GM13977 (cell line): ENCODE measurements at regions of chr16 and their contacts with region 1.

Region 1: GRCh38 chr16:84617791-84618580 is at the start of gene COTL1:
- DNase-seq: peak; percentile 96
- CTCF ChIP-seq: no peak

Region 2: DNA sequence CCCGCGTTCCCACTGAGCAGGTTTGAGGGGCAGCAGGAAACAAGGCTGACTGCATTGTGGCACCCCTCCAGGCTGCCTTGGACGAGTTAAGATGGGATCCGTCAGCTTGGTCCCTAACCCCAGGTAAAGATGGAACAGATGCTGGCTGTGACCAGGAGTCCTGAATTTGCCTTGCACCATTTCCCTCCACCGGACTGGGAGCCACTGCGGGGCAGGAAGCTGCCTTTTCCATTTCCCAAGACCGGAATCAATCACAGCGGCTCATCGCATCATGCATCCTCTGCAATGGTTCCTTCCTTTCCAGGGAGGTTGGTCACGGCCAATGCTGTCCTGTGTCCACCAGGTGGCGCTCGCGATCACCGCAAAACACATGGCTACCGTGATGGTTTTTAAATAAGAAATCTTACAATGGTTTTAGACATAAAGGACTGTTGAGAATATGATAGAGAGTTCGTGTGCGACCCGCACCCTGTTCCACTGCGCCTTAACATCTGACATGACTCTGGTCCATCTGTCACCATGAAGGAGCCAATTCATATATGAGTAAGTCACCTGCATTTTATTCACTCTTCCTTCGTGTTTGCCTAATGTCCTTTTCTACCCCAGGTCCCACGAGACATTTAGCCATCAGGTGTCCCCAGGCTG is 106.7 kb before region 1 on chr16:
- in situ Hi-C with region 1: loop called (anchors 5 kb)
- DNase-seq: peak; percentile 73
- CTCF ChIP-seq: peak; percentile 88

Region 3: GRCh38 chr16:84726079-84726668 is 108.2 kb after region 1 on chr16:
- in situ Hi-C with region 1: loop called (anchors 5 kb)
- DNase-seq: peak; percentile 39
- CTCF ChIP-seq: peak; percentile 90